Heart right ventricle (tissue), 16 donors: ENCODE measurements at regions of chr3 and their contacts with region 1.

Region 1: GRCh38 chr3:111967651-111968274 is 11.1 kb upstream of the ABHD10 start:
- DNase-seq: peak; percentile 68 to 85
- ATAC-seq: peak; percentile 74 to 88 (median 82)
- H3K4me3 ChIP-seq: peak overlapping the region in 1 of 10 donors; percentile 10
- H3K27ac ChIP-seq: peak overlapping the region in 9 of 10 donors; percentile 28 to 81 (median 56)
- H3K4me1 ChIP-seq: peaks cover 0 to 62% (median 30%) of the 10 kb centered on the region in 9 donors
- H3K27me3 ChIP-seq: no peaks in the 10 kb centered on the region
- CTCF ChIP-seq: peak; percentile 85 to 94 (median 89)

Region 2: GRCh38 chr3:111668912-111669488 is 298.8 kb before region 1 on chr3:
- intact Hi-C with region 1: loop called in 2 of 10 experiments (anchors 2 kb)
- DNase-seq: no peak
- ATAC-seq: peak; percentile 53 to 90 (median 86)
- H3K4me3 ChIP-seq: no peak overlapping the region
- H3K27ac ChIP-seq: peak overlapping the region in 4 of 10 donors; percentile 3 to 20 (median 8)
- H3K4me1 ChIP-seq: peaks cover 0 to 30% (median 3%) of the 10 kb centered on the region in 9 donors
- H3K27me3 ChIP-seq: no peaks in the 10 kb centered on the region
- CTCF ChIP-seq: peak; percentile 51 to 87 (median 75)

Region 3: GRCh38 chr3:111717601-111718000 is 250.2 kb before region 1 on chr3:
- intact Hi-C with region 1: loop called (anchors 1 to 5 kb)
- DNase-seq: peak; percentile 51 to 77
- ATAC-seq: peak; percentile 82 to 93 (median 90)
- H3K4me3 ChIP-seq: no peak overlapping the region
- H3K27ac ChIP-seq: peak overlapping the region in 6 of 10 donors; percentile 12 to 38 (median 23)
- H3K4me1 ChIP-seq: peaks cover 0 to 41% (median 19%) of the 10 kb centered on the region in 9 donors
- H3K27me3 ChIP-seq: no peaks in the 10 kb centered on the region
- CTCF ChIP-seq: peak; percentile 92 to 97 (median 94)

Region 4: DNA sequence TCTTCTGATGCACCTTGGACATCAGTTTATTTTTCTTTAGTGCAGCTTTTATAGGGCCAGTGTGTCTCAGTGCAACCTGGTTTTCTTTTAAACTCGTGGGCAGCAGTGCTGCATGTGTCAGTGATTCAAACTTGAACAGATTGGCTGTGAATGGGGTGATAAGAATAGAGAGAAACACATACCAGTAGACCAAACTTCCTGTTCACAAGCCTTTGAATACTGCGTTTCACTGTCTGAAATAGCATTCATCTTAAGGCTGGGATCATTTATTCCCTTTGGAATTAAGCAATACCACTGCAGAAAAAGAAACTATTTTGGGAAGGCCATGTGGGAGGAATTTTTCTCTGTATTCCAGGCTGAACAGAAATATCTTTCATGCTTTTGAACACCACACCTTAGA is 57.0 kb before region 1 on chr3:
- intact Hi-C with region 1: loop called in 2 of 10 experiments (anchors 5 to 10 kb)
- DNase-seq: no peak
- ATAC-seq: peak; percentile 42 to 91 (median 74)
- H3K4me3 ChIP-seq: no peak overlapping the region
- H3K27ac ChIP-seq: peak overlapping the region in 9 of 10 donors; percentile 32 to 65 (median 48)
- H3K4me1 ChIP-seq: peaks cover 8 to 86% (median 76%) of the 10 kb centered on the region in 9 donors
- H3K27me3 ChIP-seq: no peaks in the 10 kb centered on the region
- CTCF ChIP-seq: no peak

Region 5: DNA sequence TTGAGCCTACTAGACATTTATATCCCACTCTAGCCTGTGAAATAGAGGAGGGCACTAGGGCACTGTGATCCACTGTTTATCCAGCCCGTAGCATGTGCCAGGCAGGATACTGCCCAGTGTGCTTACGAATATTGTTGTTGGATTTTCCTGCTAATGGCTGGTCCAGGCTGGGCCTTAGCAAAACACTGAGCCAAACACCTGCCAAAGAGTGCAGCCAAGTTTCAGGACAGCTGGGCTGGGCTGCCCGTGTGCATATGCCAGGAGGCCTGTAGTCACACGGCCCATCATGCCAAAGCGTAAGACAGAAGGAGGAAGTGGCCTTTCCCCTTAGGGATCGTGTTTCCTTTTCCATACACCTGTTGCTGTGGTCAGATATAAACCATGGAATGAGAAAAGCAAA is 43.5 kb before region 1 on chr3:
- intact Hi-C with region 1: loop called in 3 of 10 experiments (anchors 2 to 10 kb)
- DNase-seq: peak; percentile 56 to 76
- ATAC-seq: peak; percentile 90 to 99 (median 97)
- H3K4me3 ChIP-seq: no peak overlapping the region
- H3K27ac ChIP-seq: peak overlapping the region in 9 of 10 donors; percentile 10 to 76 (median 57)
- H3K4me1 ChIP-seq: peaks cover 10 to 52% (median 41%) of the 10 kb centered on the region in 9 donors
- H3K27me3 ChIP-seq: no peaks in the 10 kb centered on the region
- CTCF ChIP-seq: no peak

Region 6: GRCh38 chr3:111932946-111933345 is 34.8 kb before region 1 on chr3:
- intact Hi-C with region 1: loop called in 1 of 10 experiments (anchors 5 kb)
- DNase-seq: no peak
- ATAC-seq: peak in 1 of 8 donors; percentile 35
- H3K4me3 ChIP-seq: no peak overlapping the region
- H3K27ac ChIP-seq: peak overlapping the region in 3 of 10 donors; percentile 0 to 57 (median 0)
- H3K4me1 ChIP-seq: peaks cover 0 to 52% (median 40%) of the 10 kb centered on the region in 9 donors
- H3K27me3 ChIP-seq: no peaks in the 10 kb centered on the region
- CTCF ChIP-seq: no peak